Aorta (tissue), 5 donors: ENCODE measurements at regions of chr6 and their contacts with region 1.

Region 1: GRCh38 chr6:32933636-32934085 is 7.2 kb downstream of the HLA-DMB start:
- DNase-seq: peak; percentile 83 to 91
- ATAC-seq: peak; percentile 84
- H3K4me3 ChIP-seq: no peak overlapping the region
- H3K27ac ChIP-seq: no peak overlapping the region
- H3K4me1 ChIP-seq: no peaks in the 10 kb centered on the region
- H3K27me3 ChIP-seq: no peaks in the 10 kb centered on the region

Region 2: GRCh38 chr6:32774426-32774825 is 159.2 kb before region 1 on chr6:
- intact Hi-C with region 1: no loop called
- DNase-seq: no peak
- ATAC-seq: no peak
- H3K4me3 ChIP-seq: no peak overlapping the region
- H3K27ac ChIP-seq: no peak overlapping the region
- H3K4me1 ChIP-seq: no peaks in the 10 kb centered on the region
- H3K27me3 ChIP-seq: no peaks in the 10 kb centered on the region

Region 3: GRCh38 chr6:32894080-32895005 is 39.3 kb before region 1 on chr6:
- intact Hi-C with region 1: loop called in 1 of 2 experiments (anchors 5 kb)
- DNase-seq: peak; percentile 95 to 97
- ATAC-seq: peak; percentile 100
- H3K4me3 ChIP-seq: peak overlapping the region; percentile 52 to 78
- H3K27ac ChIP-seq: peak overlapping the region in 1 of 2 donors; percentile 49
- H3K4me1 ChIP-seq: no peaks in the 10 kb centered on the region
- H3K27me3 ChIP-seq: no peaks in the 10 kb centered on the region

Region 4: GRCh38 chr6:32952817-32953739 is 19.4 kb after region 1 on chr6 and contains the start of gene HLA-DMA:
- intact Hi-C with region 1: loop called in 1 of 2 experiments (anchors 2 kb)
- DNase-seq: peak; percentile 93
- ATAC-seq: peak; percentile 96
- H3K4me3 ChIP-seq: no peak within 1 kb of the TSS
- H3K27ac ChIP-seq: no peak within 1 kb of the TSS
- H3K4me1 ChIP-seq: no peaks in the 10 kb centered on the region
- H3K27me3 ChIP-seq: no peaks in the 10 kb centered on the region
- total RNA-seq, gene HLA-DMA: 36.9 to 109 TPM

Region 5: GRCh38 chr6:32971581-32972352 is 38.1 kb after region 1 on chr6:
- intact Hi-C with region 1: no loop called
- DNase-seq: peak; percentile 99 to 100
- ATAC-seq: peak; percentile 83
- H3K4me3 ChIP-seq: peak overlapping the region; percentile 96 to 97
- H3K27ac ChIP-seq: peak overlapping the region; percentile 100
- H3K4me1 ChIP-seq: no peaks in the 10 kb centered on the region
- H3K27me3 ChIP-seq: peaks cover 0 to 2% of the 10 kb centered on the region in 2 donors

Region 6: DNA sequence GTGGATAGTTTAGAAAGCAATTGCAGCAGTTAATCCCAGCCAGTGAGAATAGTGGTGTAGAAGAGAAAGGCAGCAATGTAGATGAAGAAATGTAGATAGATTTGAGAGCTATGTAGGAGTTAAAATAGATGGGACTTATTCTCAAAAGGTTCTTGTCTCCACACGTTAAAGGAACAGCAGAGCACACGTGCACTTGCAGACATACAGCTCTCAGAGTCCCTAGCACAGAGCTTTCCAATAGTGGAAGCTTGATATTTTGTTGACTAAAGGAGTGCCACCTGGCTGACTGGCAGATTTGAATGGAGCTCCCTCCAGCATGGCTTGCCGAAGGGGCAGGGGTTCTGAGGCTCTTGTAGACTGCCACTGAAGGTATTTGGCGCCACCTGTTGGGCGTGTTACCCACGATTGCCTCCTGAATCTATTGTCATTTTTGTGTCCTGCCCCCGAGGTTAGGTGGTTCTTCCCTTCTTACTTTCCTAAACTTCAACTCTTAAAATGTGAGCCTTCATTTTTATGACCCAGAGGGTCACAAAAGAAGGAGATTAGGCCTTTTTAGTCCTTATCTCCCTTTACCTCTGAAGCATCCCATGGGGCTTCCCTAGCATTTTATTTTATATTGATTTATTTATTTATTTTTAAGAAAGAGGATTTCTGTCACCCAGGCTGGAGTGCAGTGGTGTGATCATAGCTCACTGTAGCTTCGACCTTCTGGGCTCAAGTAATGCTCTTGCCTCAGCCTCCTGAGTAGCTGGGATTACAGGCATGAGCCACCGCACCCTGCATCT is 51.1 kb after region 1 on chr6:
- intact Hi-C with region 1: loop called (anchors 1 kb)
- DNase-seq: peak; percentile 93 to 96
- ATAC-seq: peak; percentile 84
- H3K4me3 ChIP-seq: no peak overlapping the region
- H3K27ac ChIP-seq: no peak overlapping the region
- H3K4me1 ChIP-seq: no peaks in the 10 kb centered on the region
- H3K27me3 ChIP-seq: no peaks in the 10 kb centered on the region

Region 7: DNA sequence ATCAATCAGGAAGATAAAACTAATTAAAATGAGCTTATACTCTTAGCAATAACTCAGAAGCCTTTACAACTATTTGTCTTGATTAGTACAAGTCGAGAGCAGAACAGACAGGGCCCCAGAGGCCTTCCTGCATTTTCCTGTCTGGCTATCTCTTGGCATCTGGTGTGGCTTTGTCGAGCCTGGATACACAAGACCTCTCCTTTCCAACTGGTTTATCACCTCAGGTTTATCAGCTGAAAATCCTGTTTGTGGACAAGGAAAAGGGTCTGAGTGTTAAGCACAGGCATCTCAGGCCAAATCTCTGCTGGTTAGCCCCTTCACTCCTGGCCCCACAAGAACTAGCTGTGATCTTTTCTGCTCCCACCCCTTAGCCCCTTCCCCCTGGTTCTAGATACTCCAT is 613.8 kb after region 1 on chr6:
- intact Hi-C with region 1: no loop called
- DNase-seq: no peak
- ATAC-seq: no peak
- H3K4me3 ChIP-seq: no peak overlapping the region
- H3K27ac ChIP-seq: no peak overlapping the region
- H3K4me1 ChIP-seq: no peaks in the 10 kb centered on the region
- H3K27me3 ChIP-seq: no peaks in the 10 kb centered on the region